Activated CD4-positive, alpha-beta T cell treated with anti-CD3 and anti-CD28 coated beads, Interleukin-2, amount 10 ng/mL, durations not matched to agents 24 days and 14 days (primary cell): ENCODE measurements at regions of chr5 and their contacts with region 1.

Region 1: GRCh38 chr5:52709171-52709925 is 78.4 kb upstream of the ITGA1 start:
- DNase-seq: peak; percentile 72
- H3K4me3 Mint-ChIP-seq: peak overlapping the region; percentile 20
- H3K27ac Mint-ChIP-seq: peak overlapping the region; percentile 25
- H3K4me1 Mint-ChIP-seq: peaks cover 50% of the 10 kb centered on the region
- H3K27me3 Mint-ChIP-seq: peaks cover 2% of the 10 kb centered on the region

Region 2: GRCh38 chr5:51657340-51658240 is 1051.8 kb before region 1 on chr5:
- intact Hi-C with region 1: no loop called
- DNase-seq: no peak
- H3K4me3 Mint-ChIP-seq: no peak overlapping the region
- H3K27ac Mint-ChIP-seq: no peak overlapping the region
- H3K4me1 Mint-ChIP-seq: no peaks in the 10 kb centered on the region
- H3K27me3 Mint-ChIP-seq: no peaks in the 10 kb centered on the region

Region 3: GRCh38 chr5:52725065-52725746 is 15.9 kb after region 1 on chr5:
- intact Hi-C with region 1: loop called (anchors 1 kb)
- DNase-seq: peak; percentile 93
- H3K4me3 Mint-ChIP-seq: peak overlapping the region; percentile 69
- H3K27ac Mint-ChIP-seq: peak overlapping the region; percentile 90
- H3K4me1 Mint-ChIP-seq: peaks cover 50% of the 10 kb centered on the region
- H3K27me3 Mint-ChIP-seq: no peaks in the 10 kb centered on the region

Region 4: GRCh38 chr5:52743970-52744369 is 34.6 kb after region 1 on chr5:
- intact Hi-C with region 1: loop called (anchors 1 kb)
- DNase-seq: peak; percentile 89
- H3K4me3 Mint-ChIP-seq: peak overlapping the region; percentile 31
- H3K27ac Mint-ChIP-seq: peak overlapping the region; percentile 76
- H3K4me1 Mint-ChIP-seq: peaks cover 49% of the 10 kb centered on the region
- H3K27me3 Mint-ChIP-seq: no peaks in the 10 kb centered on the region

Region 5: DNA sequence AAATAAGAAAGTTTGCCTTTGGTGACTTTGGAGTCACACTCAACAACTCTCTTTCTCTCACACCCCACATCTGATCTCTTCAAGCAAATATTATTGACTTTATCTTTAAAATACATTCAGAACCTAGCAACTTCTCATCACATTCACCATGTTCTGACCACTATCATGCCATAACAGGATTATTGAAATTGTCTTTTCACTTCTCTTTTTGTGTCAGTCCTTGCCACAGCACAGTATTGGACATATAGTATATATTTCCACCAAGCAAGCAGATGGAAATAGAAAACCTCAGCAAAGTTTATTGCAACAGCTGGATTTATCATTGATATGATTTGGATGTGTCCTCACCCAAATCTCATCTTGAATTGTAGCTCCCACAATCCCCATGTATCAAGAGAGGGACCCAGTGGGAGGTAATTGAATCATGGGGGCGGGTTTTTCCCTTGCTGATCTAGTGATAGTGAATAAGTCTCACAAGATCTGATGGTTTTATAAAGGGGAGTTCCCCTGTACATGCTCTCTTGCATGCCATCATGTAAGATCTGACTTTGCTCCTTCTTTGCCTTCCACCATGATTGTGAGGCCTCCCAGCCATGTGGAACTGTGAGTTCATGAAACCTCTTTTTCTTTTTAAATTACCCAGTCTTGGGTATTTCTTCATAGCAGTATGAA is 51.5 kb after region 1 on chr5:
- intact Hi-C with region 1: loop called (anchors 5 kb)
- DNase-seq: no peak
- H3K4me3 Mint-ChIP-seq: no peak overlapping the region
- H3K27ac Mint-ChIP-seq: no peak overlapping the region
- H3K4me1 Mint-ChIP-seq: peaks cover 12% of the 10 kb centered on the region
- H3K27me3 Mint-ChIP-seq: no peaks in the 10 kb centered on the region